Activated CD4-positive, alpha-beta T cell treated with anti-CD3 and anti-CD28 coated beads for 36 hours (primary cell): ENCODE measurements at regions of chr1 and their contacts with region 1.

Region 1: DNA sequence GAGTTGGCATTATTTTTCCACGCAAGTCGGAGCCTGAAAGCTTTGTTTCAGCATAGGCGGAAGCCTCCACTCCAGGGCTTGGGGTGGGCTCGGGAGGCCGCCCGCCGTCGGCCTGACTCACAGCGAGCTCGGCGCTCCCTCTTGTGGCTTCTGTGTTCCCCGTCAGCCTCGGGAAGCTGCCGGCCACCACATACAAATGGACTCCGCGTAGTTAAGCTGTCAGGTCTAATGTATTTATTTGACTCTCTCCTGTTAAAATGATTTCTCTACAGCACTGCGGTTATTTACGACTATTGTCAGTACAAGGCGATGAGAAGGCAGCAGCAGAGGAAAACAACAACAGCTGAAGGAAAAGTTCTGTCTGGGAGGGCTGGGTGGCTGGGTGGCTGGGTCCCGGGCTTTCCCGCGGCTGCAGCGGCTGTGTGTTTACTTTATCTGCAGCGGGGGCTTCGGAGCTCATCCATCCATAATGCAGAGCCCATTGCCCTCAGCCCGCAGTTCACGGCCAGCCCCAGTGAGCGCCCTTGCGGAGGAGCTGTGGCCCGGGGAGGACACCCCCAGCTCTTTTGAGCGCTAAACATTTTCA is 375.7 kb upstream of the CAMK1G start:
- DNase-seq: peak; percentile 58
- ATAC-seq: peak; percentile 49
- H3K4me3 Mint-ChIP-seq: no peak overlapping the region
- H3K27ac Mint-ChIP-seq: no peak overlapping the region
- H3K4me1 Mint-ChIP-seq: peaks cover 2% of the 10 kb centered on the region
- H3K27me3 Mint-ChIP-seq: peaks cover 39% of the 10 kb centered on the region

Region 2: GRCh38 chr1:208652296-208653160 is 555.3 kb before region 1 on chr1:
- CTCF ChIA-PET with region 1: interaction called, 3 read pairs
- POLR2A ChIA-PET with region 1: no interaction called
- intact Hi-C with region 1: loop called in 1 of 2 experiments (anchors 2 kb)
- DNase-seq: peak; percentile 49
- ATAC-seq: no peak
- H3K4me3 Mint-ChIP-seq: no peak overlapping the region
- H3K27ac Mint-ChIP-seq: no peak overlapping the region
- H3K4me1 Mint-ChIP-seq: no peaks in the 10 kb centered on the region
- H3K27me3 Mint-ChIP-seq: peaks cover 31% of the 10 kb centered on the region

Region 3: GRCh38 chr1:209248649-209249279 is 41.0 kb after region 1 on chr1:
- CTCF ChIA-PET with region 1: interaction called, 10 read pairs
- POLR2A ChIA-PET with region 1: no interaction called
- intact Hi-C with region 1: loop called (anchors 1 to 5 kb)
- DNase-seq: peak; percentile 64
- ATAC-seq: peak; percentile 63
- H3K4me3 Mint-ChIP-seq: no peak overlapping the region
- H3K27ac Mint-ChIP-seq: no peak overlapping the region
- H3K4me1 Mint-ChIP-seq: no peaks in the 10 kb centered on the region
- H3K27me3 Mint-ChIP-seq: no peaks in the 10 kb centered on the region

Region 4: DNA sequence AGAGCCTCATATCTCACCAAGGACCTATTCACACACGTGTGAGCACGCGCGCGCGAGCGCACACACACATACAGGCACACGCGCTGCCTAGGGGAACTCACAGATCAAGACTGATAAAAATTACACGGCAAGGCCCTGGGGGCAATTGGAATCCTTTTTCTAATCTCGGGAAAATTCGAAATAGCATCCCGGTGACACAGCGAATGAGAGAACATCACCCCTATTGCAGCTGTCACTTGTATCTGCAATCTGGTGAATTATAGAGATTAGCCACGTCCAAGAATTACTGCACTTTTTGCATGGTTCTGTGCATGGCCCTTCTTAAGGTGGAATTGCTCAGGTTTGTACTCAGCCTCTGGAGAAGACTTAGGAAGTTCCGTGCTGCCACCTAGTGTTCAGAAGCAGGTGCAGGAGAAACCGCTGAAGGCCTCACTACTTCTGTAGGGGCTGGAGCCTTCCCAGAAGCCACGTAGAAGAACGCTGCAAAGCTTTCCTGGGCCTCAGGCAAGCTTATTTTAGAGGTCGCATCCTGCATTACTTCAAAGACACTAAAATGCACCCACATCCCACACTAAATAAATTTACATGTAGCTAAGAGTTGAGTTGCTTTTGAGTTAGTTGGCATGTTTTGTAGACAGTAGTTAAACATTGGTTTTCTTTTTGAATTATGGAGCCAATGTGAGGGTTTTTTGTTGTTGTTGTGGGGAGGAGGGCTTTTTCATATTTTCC is 146.5 kb after region 1 on chr1:
- CTCF ChIA-PET with region 1: interaction called, 4 read pairs
- POLR2A ChIA-PET with region 1: no interaction called
- intact Hi-C with region 1: loop called (anchors 2 to 5 kb)
- DNase-seq: peak; percentile 75
- ATAC-seq: peak; percentile 82
- H3K4me3 Mint-ChIP-seq: no peak overlapping the region
- H3K27ac Mint-ChIP-seq: no peak overlapping the region
- H3K4me1 Mint-ChIP-seq: no peaks in the 10 kb centered on the region
- H3K27me3 Mint-ChIP-seq: no peaks in the 10 kb centered on the region

Region 5: GRCh38 chr1:209435654-209436566 is 228.1 kb after region 1 on chr1:
- CTCF ChIA-PET with region 1: no interaction called
- POLR2A ChIA-PET with region 1: no interaction called
- intact Hi-C with region 1: loop called in 1 of 2 experiments (anchors 10 kb)
- DNase-seq: peak; percentile 71
- ATAC-seq: no peak
- H3K4me3 Mint-ChIP-seq: no peak overlapping the region
- H3K27ac Mint-ChIP-seq: no peak overlapping the region
- H3K4me1 Mint-ChIP-seq: no peaks in the 10 kb centered on the region
- H3K27me3 Mint-ChIP-seq: peaks cover 18% of the 10 kb centered on the region

Region 6: GRCh38 chr1:209513226-209513625 is 305.4 kb after region 1 on chr1:
- CTCF ChIA-PET with region 1: no interaction called
- POLR2A ChIA-PET with region 1: no interaction called
- intact Hi-C with region 1: loop called in 1 of 2 experiments (anchors 2 kb)
- DNase-seq: no peak
- ATAC-seq: no peak
- H3K4me3 Mint-ChIP-seq: no peak overlapping the region
- H3K27ac Mint-ChIP-seq: no peak overlapping the region
- H3K4me1 Mint-ChIP-seq: no peaks in the 10 kb centered on the region
- H3K27me3 Mint-ChIP-seq: peaks cover 10% of the 10 kb centered on the region

Region 7: DNA sequence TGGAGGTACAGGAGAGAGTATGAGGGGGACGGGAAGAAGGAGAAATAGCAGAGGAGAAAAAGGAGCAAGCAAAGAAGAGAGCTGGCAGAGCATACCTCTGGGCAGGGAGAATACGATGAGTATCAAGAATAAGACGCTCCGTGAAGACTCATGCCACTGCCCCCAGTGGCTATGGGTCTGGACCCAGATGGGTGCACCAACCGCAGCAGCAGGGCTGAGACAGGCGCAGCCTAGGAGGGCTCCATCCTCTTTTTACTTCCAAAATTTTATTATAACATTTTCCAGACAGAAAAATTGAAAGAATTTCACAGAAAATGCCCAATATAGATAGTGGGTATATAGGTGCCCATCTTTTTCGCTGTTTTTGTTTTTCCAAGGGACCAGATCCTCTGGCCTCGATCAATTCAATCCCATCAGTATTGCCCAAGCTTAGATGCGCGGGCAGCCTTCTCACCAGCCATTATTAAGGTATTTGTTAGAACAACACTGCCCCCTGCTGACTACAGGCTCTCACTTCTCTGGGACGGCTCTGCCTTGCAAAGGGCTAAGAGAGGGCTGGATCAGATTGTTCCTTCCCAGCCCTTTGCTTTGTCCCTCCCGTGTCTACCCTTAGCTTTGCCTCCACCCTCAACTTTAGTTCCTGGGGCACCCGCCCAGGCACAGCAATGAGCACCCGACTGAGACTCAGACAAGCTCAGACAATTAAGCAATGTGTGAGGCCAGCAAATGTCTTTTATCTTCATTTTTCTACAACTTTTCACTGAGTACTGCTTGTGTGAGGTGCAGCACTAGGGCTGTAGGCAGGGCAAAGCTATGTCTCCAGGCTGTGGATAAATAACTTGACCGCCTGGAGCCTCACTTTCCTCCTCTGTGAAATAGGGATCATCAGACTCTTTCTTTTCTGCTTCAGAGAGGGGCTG is 358.2 kb after region 1 on chr1:
- CTCF ChIA-PET with region 1: interaction called, 5 read pairs
- POLR2A ChIA-PET with region 1: no interaction called
- intact Hi-C with region 1: loop called (anchors 1 to 5 kb)
- DNase-seq: peak; percentile 88
- ATAC-seq: peak; percentile 89
- H3K4me3 Mint-ChIP-seq: no peak overlapping the region
- H3K27ac Mint-ChIP-seq: no peak overlapping the region
- H3K4me1 Mint-ChIP-seq: peaks cover 21% of the 10 kb centered on the region
- H3K27me3 Mint-ChIP-seq: peaks cover 9% of the 10 kb centered on the region

Region 8: GRCh38 chr1:209723756-209724693 is 516.2 kb after region 1 on chr1:
- CTCF ChIA-PET with region 1: no interaction called
- POLR2A ChIA-PET with region 1: no interaction called
- intact Hi-C with region 1: no loop called
- DNase-seq: peak; percentile 72
- ATAC-seq: peak; percentile 88
- H3K4me3 Mint-ChIP-seq: peak overlapping the region; percentile 29
- H3K27ac Mint-ChIP-seq: peak overlapping the region; percentile 94
- H3K4me1 Mint-ChIP-seq: peaks cover 58% of the 10 kb centered on the region
- H3K27me3 Mint-ChIP-seq: no peaks in the 10 kb centered on the region